Pancreas (tissue), 10 donors: ENCODE measurements at regions of chr13 and their contacts with region 1.

Region 1: DNA sequence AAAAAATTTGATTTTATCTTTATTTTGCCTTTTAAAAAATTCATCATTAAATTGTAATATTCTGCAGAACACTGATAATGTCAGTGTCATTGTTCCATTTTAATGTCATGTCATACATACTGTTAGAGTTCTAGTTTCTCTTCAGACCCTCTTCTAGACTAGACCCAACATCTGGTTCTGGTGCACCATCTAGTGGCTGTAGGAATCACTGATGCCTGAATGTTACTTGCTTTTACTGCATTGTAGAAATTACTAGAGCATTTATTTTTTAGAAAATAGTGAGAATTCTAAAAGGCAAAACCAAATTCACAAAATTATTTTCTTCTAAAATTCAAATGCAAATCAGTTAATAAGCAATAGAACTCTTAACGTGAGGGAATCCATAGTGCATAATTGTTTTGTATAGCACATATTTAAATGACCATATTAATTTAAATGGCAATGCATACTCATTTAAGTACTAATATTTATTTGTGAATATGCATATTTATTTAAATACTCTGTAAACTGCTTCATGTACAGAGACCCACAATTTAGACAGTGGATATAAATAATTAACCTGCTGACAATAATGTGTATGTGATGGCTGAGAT is 425.7 kb downstream of the KLF12 start:
- DNase-seq: peak in 3 of 6 donors; percentile 16 to 59 (median 34)
- ATAC-seq: peak; percentile 67 to 92 (median 88)
- H3K4me3 ChIP-seq: no peak overlapping the region
- H3K27ac ChIP-seq: no peak overlapping the region
- H3K4me1 ChIP-seq: no peaks in the 10 kb centered on the region
- H3K27me3 ChIP-seq: no peaks in the 10 kb centered on the region
- CTCF ChIP-seq: peak; percentile 37 to 69 (median 63)

Region 2: GRCh38 chr13:72808917-72809500 is 899.5 kb before region 1 on chr13:
- intact Hi-C with region 1: loop called in 1 of 3 experiments (anchors 10 kb)
- DNase-seq: no peak
- ATAC-seq: peak in 3 of 4 donors; percentile 31 to 57 (median 45)
- H3K4me3 ChIP-seq: no peak overlapping the region
- H3K27ac ChIP-seq: no peak overlapping the region
- H3K4me1 ChIP-seq: peaks cover 0 to 4% (median 0%) of the 10 kb centered on the region in 3 donors
- H3K27me3 ChIP-seq: no peaks in the 10 kb centered on the region
- CTCF ChIP-seq: peak; percentile 29 to 69 (median 42)

Region 3: DNA sequence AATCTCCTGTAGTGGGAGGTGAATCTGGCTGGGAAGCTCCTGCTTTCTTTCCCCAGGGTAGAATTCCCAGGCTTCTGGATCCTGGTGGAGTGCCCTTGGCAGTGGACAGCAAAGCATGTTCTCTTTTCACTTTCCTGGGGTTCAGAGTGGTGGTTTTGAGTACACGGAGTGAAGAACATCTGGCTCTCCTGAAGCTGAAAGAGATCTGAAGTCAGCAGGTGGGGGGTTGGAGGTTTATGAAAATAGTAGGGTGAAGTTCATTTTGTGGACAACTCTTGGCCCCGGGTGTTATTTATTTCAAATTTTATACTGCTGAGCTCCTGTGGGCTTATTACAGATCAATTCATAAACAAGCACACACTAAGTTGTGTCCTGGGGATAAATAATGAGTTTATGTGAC is 152.4 kb before region 1 on chr13:
- intact Hi-C with region 1: no loop called
- DNase-seq: no peak
- ATAC-seq: no peak
- H3K4me3 ChIP-seq: no peak overlapping the region
- H3K27ac ChIP-seq: no peak overlapping the region
- H3K4me1 ChIP-seq: peaks cover 0 to 3% (median 0%) of the 10 kb centered on the region in 3 donors
- H3K27me3 ChIP-seq: no peaks in the 10 kb centered on the region
- CTCF ChIP-seq: no peak